Sigmoid colon (tissue), 7 donors: ENCODE measurements at regions of chr6 and their contacts with region 1.

Region 1: GRCh38 chr6:2952557-2953095 is 18.7 kb downstream of the SERPINB6 start:
- DNase-seq: peak; percentile 93
- H3K4me3 ChIP-seq: peak overlapping the region in 3 of 4 donors; percentile 11 to 17 (median 16)
- H3K27ac ChIP-seq: peak overlapping the region; percentile 73 to 81 (median 78)
- H3K4me1 ChIP-seq: peaks cover 0 to 25% (median 22%) of the 10 kb centered on the region in 4 donors
- H3K27me3 ChIP-seq: no peaks in the 10 kb centered on the region
- CTCF ChIP-seq: peak; percentile 98 to 100 (median 100)
- EP300 ChIP-seq: no peak
- POLR2A ChIP-seq: no peak

Region 2: GRCh38 chr6:2971420-2972218 is 19.0 kb after region 1 on chr6 and contains the start of gene SERPINB6:
- intact Hi-C with region 1: loop called (anchors 2 kb)
- DNase-seq: peak; percentile 95
- H3K4me3 ChIP-seq: peak within 1 kb of the TSS; percentile 68 to 88 (median 84)
- H3K27ac ChIP-seq: peak within 1 kb of the TSS; percentile 98 to 99 (median 98)
- H3K4me1 ChIP-seq: peaks cover 0 to 39% (median 17%) of the 10 kb centered on the region in 4 donors
- H3K27me3 ChIP-seq: no peaks in the 10 kb centered on the region
- CTCF ChIP-seq: no peak
- EP300 ChIP-seq: no peak
- POLR2A ChIP-seq: peak in 1 of 2 donors; percentile 39
- total RNA-seq, gene SERPINB6: 150 to 207 (median 174) TPM

Region 3: GRCh38 chr6:3052481-3053230 is 100.0 kb after region 1 on chr6:
- intact Hi-C with region 1: loop called (anchors 5 kb)
- DNase-seq: no peak
- H3K4me3 ChIP-seq: no peak overlapping the region
- H3K27ac ChIP-seq: peak overlapping the region in 1 of 4 donors; percentile 72
- H3K4me1 ChIP-seq: peaks cover 0 to 12% (median 8%) of the 10 kb centered on the region in 4 donors
- H3K27me3 ChIP-seq: no peaks in the 10 kb centered on the region
- CTCF ChIP-seq: no peak
- EP300 ChIP-seq: no peak
- POLR2A ChIP-seq: no peak